ENCODE measurements at regions of chr1 and their contacts with region 1.

Region 1: DNA sequence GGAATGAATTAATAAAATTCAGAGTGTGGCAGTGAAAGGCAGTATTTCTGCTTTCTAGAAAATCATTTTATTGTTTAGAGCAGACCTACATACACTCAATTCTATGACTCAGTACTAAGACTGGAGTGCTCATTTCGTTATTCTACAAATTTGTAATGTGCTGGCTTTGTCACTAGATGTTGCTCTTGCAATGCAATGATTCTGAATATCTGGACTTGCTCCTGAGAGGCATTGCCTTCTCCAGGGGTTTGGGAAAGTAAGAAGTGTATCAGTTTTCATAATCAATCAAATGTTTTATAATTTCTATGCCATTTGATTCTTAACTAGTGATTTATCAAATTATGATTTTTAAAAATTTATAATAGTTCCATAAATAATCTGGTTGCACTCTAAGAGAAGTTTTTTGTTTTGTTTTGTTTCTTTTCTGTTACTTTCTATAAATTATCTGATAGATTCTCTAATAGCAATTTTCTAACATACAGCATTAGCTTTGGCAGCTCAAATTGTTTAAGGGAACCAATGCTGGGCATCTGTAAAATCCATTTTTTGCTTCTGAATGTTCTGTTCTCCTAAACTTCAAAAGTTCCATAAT is 280.5 kb upstream of the SGIP1 start:
- DNase-seq: peak; percentile 85
- ATAC-seq: peak; percentile 96
- H3K4me3 ChIP-seq: no peak overlapping the region
- H3K27ac ChIP-seq: no peak overlapping the region
- H3K4me1 ChIP-seq: peaks cover 8% of the 10 kb centered on the region
- H3K27me3 ChIP-seq: no peaks in the 10 kb centered on the region
- CTCF ChIP-seq: peak; percentile 95
- POLR2A ChIP-seq: peak; percentile 45; the same call in 1 of the 2 replicates
- RAD21 ChIP-seq: peak; percentile 99

Region 2: DNA sequence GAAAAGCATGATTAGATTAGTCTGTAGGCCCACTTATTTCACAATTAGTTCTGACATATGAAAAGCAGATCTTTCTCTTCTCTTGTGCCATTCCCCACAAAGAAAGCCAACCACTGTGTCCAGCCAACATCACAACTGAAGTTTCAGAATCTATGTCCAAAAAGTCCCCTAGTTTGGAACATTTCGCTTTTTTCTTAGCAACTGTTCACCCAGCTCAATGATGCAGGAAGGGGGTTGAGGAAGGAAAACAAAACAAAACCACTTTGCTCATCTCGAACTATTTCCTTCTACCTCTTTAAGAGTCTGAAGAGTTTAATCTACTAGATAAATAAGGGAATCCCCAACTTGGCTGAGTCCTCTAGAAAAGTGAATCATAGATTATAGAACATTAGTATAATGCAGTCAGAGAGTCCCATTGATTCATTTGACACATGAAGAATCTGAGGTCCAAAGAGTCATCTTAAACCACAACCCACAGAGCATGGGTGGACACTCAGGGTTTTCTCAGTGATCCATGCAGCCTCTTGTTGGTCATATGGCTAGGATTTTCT is 121.2 kb after region 1 on chr1:
- CTCF ChIA-PET with region 1: no interaction called
- POLR2A ChIA-PET with region 1: no interaction called
- dilution Hi-C with region 1: no loop called
- in situ Hi-C with region 1: no loop called
- intact Hi-C with region 1: loop called (anchors 1 kb)
- DNase-seq: peak; percentile 95
- ATAC-seq: peak; percentile 66
- H3K4me3 ChIP-seq: no peak overlapping the region
- H3K27ac ChIP-seq: no peak overlapping the region
- H3K4me1 ChIP-seq: peaks cover 22% of the 10 kb centered on the region
- H3K27me3 ChIP-seq: no peaks in the 10 kb centered on the region
- CTCF ChIP-seq: no peak
- POLR2A ChIP-seq: no peak
- RAD21 ChIP-seq: no peak

Region 3: GRCh38 chr1:66711420-66711819 is 458.0 kb after region 1 on chr1:
- CTCF ChIA-PET with region 1: no interaction called
- POLR2A ChIA-PET with region 1: no interaction called
- dilution Hi-C with region 1: no loop called
- in situ Hi-C with region 1: no loop called
- intact Hi-C with region 1: no loop called
- DNase-seq: no peak
- ATAC-seq: no peak; the same call in 1 of the 2 replicates
- H3K4me3 ChIP-seq: no peak overlapping the region
- H3K27ac ChIP-seq: no peak overlapping the region
- H3K4me1 ChIP-seq: no peaks in the 10 kb centered on the region
- H3K27me3 ChIP-seq: no peaks in the 10 kb centered on the region
- CTCF ChIP-seq: 0 out of 2 replicates have a peak, but pooled peaks have one; percentile 17
- POLR2A ChIP-seq: no peak
- RAD21 ChIP-seq: no peak

Region 4: DNA sequence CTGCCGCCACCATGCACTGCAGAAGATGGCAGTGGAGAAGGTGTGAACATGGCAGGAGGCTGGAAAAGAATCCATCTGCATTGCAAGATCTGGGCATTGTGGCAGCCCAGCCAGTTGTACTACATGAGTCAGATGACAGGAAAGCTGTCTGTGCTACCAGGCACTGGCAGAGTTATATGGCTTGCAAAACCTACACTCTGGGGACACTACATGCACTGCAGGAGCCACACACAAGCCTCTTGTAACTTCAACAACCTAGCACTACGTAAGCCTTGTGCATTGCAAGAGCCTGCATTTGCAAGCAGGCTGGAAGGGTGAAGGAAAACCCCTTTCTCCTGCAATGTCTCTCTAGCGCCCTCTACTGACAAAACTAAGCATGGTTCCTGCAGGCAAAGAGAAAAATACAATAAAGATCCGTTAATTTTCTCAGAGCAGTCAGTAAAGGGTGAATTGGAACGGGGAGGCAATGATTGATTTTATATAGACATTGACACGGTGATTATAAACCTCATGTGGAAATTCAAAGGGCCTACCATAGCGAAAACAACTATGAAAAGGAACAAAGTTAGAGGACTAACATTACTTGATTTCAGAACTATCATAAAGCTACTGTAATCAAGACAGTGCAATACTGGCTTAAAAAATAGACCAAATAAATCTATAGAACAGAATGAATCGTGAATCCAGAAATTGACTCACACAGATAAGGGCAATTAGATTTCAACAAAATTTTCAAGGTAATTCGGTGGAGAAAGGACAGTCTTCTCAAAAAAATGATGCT is 472.6 kb after region 1 on chr1:
- CTCF ChIA-PET with region 1: no interaction called
- POLR2A ChIA-PET with region 1: no interaction called
- dilution Hi-C with region 1: no loop called
- in situ Hi-C with region 1: loop called (anchors 25 kb)
- intact Hi-C with region 1: loop called (anchors 10 kb)
- DNase-seq: peak; percentile 81
- ATAC-seq: peak; percentile 70
- H3K4me3 ChIP-seq: no peak overlapping the region
- H3K27ac ChIP-seq: no peak overlapping the region
- H3K4me1 ChIP-seq: no peaks in the 10 kb centered on the region
- H3K27me3 ChIP-seq: no peaks in the 10 kb centered on the region
- CTCF ChIP-seq: peak; percentile 91
- POLR2A ChIP-seq: no peak
- RAD21 ChIP-seq: peak; percentile 75